ENCODE measurements at regions of chr16 and their contacts with region 1.

Region 1: DNA sequence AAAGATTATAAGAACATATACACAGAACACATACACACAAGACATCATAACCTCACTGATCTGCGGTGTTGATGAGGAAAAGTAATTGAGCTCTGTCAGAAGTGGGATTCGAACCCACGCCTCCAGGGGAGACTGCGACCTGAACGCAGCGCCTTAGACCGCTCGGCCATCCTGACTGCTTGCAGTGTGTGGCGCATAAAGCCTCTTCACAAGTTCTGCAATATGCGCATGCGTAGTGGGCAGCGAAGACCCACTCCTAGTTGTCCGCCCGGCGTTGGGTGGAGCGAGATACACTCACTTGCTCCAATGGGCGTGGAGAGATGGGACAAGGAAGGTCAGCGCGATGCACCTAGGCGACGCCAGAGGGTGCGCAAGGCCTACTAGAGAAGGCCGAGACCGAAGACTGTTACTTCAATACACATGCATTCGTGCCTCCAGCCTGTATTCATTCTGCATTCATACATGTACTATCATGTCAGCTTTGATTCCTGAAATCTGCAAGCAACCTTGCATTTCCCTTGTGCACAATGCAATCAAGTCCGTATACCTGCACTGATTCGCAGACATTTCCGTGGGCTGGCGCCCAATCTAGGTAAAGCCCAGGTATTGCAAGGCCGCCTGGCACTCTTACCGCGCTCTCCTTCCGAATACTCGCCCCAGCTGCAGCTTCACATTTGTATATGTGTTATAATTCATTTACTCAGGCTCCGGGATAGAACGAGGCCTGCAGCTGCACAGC is 16.1 kb upstream of the PLLP start:
- DNase-seq: peak; percentile 99
- ATAC-seq: peak; percentile 81
- H3K4me3 ChIP-seq: peak overlapping the region; percentile 58; the same call in 1 of the 2 replicates
- H3K27ac ChIP-seq: peak overlapping the region; percentile 77
- H3K4me1 ChIP-seq: peaks cover 34% of the 10 kb centered on the region
- H3K27me3 ChIP-seq: no peaks in the 10 kb centered on the region
- CTCF ChIP-seq: peak; percentile 95 to 99 (median 99); a peak in 5 of 6 replicates
- EP300 ChIP-seq: peak in 1 of 2 experiments; percentile 83; a peak in 1 of 4 replicates
- POLR2A ChIP-seq: no peak; the same call in 1 of the 2 replicates
- RAD21 ChIP-seq: peak; percentile 98

Region 2: GRCh38 chr16:57185944-57186871 is 114.3 kb before region 1 on chr16 and contains the starts of genes PSME3IP1 and RSPRY1:
- CTCF ChIA-PET with region 1: interaction called, 3 read pairs
- POLR2A ChIA-PET with region 1: interaction called, 4 read pairs
- RAD21 ChIA-PET with region 1: interaction called, 20 read pairs
- SMC1A ChIA-PET with region 1: interaction called, 4 read pairs
- in situ Hi-C with region 1: no loop called
- intact Hi-C with region 1: loop called (anchors 2 kb)
- DNase-seq: peak; percentile 99
- ATAC-seq: peak; percentile 92
- H3K4me3 ChIP-seq: peak within 1 kb of the TSS; percentile 84
- H3K27ac ChIP-seq: peak within 1 kb of the TSS; percentile 94
- H3K4me1 ChIP-seq: peaks cover 5% of the 10 kb centered on the region; the same call in 1 of the 2 replicates
- H3K27me3 ChIP-seq: no peaks in the 10 kb centered on the region
- CTCF ChIP-seq: no peak
- EP300 ChIP-seq: no peak
- POLR2A ChIP-seq: peak; percentile 91
- RAD21 ChIP-seq: no peak
- polyA plus RNA-seq, gene PSME3IP1: 72.5 to 90.2 TPM
- polyA plus RNA-seq, gene RSPRY1: 18.5 to 25.1 TPM

Region 3: DNA sequence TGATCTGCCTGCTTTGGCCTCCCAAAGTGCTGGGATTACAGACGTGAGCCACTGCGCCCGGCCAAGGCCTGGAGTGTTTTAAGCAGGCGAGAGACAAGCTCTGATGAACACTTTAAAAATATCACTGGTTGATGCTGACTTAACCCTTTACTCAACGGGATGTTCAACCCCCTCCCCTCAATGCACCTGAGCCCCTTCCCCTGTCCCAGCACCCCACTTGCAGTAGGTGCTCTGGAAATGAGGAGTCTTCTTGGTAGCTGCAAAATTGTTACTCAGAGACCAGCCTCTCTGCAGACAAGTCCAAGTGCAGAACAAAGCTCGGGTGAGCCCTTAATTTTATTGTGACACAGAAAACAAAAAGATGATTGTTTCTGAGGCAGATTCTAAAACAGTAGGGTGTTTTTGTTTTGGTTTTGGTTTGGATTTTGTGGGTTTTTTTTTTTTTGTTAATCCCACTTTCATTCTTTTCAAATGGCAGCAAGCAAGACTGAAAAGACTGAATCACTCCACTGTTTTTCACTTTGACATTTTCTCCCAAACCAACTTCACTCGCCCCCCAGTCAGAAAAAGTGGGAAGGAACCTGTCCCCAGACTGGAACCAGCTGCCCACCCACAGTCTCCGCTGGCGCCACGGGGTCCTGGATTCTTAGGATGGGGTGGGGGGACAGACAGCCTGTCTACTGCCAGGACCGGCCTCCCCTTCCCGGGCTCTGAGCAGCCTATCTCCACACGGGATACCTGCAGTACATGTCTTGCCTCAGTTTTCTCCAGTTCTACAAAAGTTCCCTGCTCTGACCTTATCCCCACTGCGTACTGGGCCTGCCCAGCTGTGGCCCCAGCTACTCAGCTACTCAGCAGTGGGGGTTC is 10.9 kb before region 1 on chr16:
- CTCF ChIA-PET with region 1: interaction called, 9 read pairs
- POLR2A ChIA-PET with region 1: interaction called, 3 read pairs
- RAD21 ChIA-PET with region 1: interaction called, 5 read pairs
- SMC1A ChIA-PET with region 1: interaction called, 11 read pairs
- in situ Hi-C with region 1: no loop called
- intact Hi-C with region 1: no loop called
- DNase-seq: no peak
- ATAC-seq: peak; percentile 63
- H3K4me3 ChIP-seq: no peak overlapping the region
- H3K27ac ChIP-seq: no peak overlapping the region
- H3K4me1 ChIP-seq: peaks cover 12% of the 10 kb centered on the region
- H3K27me3 ChIP-seq: no peaks in the 10 kb centered on the region
- CTCF ChIP-seq: no peak
- EP300 ChIP-seq: no peak
- POLR2A ChIP-seq: no peak
- RAD21 ChIP-seq: no peak

Region 4: GRCh38 chr16:57358527-57359095 is 58.1 kb after region 1 on chr16 and contains the start of gene CCL22:
- CTCF ChIA-PET with region 1: interaction called, 19 read pairs
- POLR2A ChIA-PET with region 1: interaction called, 9 read pairs
- RAD21 ChIA-PET with region 1: interaction called, 29 read pairs
- SMC1A ChIA-PET with region 1: interaction called, 14 read pairs
- in situ Hi-C with region 1: no loop called
- intact Hi-C with region 1: loop called (anchors 5 kb)
- DNase-seq: peak; percentile 45
- ATAC-seq: peak; percentile 71
- H3K4me3 ChIP-seq: peak within 1 kb of the TSS; percentile 37; the same call in 1 of the 2 replicates
- H3K27ac ChIP-seq: peak within 1 kb of the TSS; percentile 30
- H3K4me1 ChIP-seq: peaks cover 23% of the 10 kb centered on the region
- H3K27me3 ChIP-seq: no peaks in the 10 kb centered on the region
- CTCF ChIP-seq: no peak
- EP300 ChIP-seq: no peak; a peak in 1 of 4 replicates
- POLR2A ChIP-seq: peak; percentile 89
- RAD21 ChIP-seq: no peak
- polyA plus RNA-seq, gene CCL22: 581 to 591 TPM

Region 5: DNA sequence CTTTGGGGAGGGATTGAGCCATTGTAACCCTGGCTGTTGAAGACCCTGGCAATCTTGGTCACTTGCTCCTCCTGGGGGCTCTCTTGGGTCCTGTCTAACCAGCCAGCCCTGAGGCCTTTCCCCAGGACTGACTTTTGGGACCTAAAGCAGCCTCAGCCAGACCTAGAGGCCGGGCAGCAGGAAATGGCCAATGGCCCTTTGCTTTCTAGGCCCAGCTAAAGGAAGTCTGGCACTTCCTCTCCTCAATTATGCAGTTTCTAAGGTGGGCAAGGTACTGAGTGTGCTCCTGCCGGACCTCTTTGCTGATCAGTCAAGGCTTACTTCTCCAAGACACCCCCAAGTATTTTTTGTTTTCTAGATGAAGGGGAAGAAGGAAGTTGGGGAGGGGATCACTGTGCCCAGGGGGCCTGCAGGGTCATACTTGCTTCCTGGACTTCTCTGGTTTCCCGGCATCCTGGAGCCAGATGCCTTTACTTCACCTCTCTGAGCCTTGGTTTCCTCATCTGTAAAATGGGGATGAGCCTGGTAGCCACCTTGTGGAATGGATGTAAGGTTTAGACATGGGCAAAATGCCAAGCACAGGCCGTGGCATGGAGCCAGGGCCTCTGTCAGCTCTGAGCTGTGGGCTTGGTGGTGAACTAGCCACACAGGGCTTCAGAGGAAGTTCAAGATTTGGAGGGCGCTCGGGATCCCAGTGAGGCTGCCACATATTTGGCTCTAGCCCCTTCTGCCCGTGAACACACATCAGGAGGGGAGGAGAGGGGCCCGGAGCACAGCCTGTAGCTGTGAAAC is 80.3 kb after region 1 on chr16:
- CTCF ChIA-PET with region 1: interaction called, 20 read pairs
- POLR2A ChIA-PET with region 1: interaction called, 28 read pairs
- RAD21 ChIA-PET with region 1: interaction called, 40 read pairs
- SMC1A ChIA-PET with region 1: interaction called, 55 read pairs
- in situ Hi-C with region 1: no loop called
- intact Hi-C with region 1: loop called (anchors 1 kb)
- DNase-seq: no peak
- ATAC-seq: peak; percentile 3
- H3K4me3 ChIP-seq: no peak overlapping the region
- H3K27ac ChIP-seq: peak overlapping the region; percentile 27
- H3K4me1 ChIP-seq: peaks cover 53% of the 10 kb centered on the region
- H3K27me3 ChIP-seq: no peaks in the 10 kb centered on the region
- CTCF ChIP-seq: no peak
- EP300 ChIP-seq: no peak
- POLR2A ChIP-seq: no peak
- RAD21 ChIP-seq: no peak

Region 6: DNA sequence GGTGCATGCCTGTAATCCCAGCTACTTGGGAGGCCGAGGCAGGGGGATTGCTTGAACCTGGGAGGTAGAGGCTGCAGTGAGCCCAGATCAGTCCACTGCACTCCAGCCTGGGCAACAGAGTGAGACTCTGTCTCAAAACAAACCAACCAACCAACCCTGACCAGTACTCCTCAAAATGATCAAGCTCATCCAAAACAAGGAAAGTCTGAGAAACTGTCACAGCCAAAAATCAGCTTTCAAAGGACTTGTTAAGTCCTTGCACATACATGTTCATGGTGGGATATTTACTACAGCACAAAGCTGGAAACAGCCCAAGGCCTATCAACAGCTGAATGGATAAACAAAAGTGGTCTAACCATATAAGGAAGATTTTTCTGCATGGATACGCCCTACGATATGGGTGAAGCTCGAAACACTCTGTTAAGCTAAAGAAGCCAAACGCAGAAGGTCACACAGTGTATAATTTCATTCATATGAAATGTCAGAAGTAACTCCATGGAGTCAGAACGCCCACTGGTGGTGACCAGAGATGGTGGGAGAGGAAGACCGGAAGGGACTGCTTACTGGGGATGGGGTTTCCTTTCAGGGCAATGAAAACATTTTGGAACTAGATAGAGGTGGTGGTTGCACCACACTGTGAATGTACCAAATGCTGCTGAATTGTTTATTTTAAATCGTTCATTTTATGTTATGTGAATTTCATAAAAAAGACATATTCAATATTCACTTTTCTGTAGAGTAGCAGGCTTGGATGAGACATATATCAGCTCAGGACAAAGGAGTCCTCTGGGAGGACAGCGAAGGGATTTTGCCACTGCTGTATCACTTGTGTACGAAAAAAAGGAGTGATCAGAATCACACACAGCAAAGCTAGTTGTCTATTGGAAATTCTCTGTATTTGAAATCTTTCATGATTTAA is 121.7 kb after region 1 on chr16:
- CTCF ChIA-PET with region 1: interaction called, 632 read pairs
- POLR2A ChIA-PET with region 1: interaction called, 65 read pairs
- RAD21 ChIA-PET with region 1: interaction called, 293 read pairs
- SMC1A ChIA-PET with region 1: interaction called, 283 read pairs
- in situ Hi-C with region 1: loop called (anchors 5 kb)
- intact Hi-C with region 1: loop called (anchors 1 kb)
- DNase-seq: no peak
- ATAC-seq: peak; percentile 49
- H3K4me3 ChIP-seq: no peak overlapping the region
- H3K27ac ChIP-seq: no peak overlapping the region
- H3K4me1 ChIP-seq: peaks cover 4% of the 10 kb centered on the region
- H3K27me3 ChIP-seq: no peaks in the 10 kb centered on the region
- CTCF ChIP-seq: peak; percentile 48 to 62 (median 62); a peak in 5 of 6 replicates
- EP300 ChIP-seq: no peak
- POLR2A ChIP-seq: no peak
- RAD21 ChIP-seq: peak; percentile 71

Region 7: DNA sequence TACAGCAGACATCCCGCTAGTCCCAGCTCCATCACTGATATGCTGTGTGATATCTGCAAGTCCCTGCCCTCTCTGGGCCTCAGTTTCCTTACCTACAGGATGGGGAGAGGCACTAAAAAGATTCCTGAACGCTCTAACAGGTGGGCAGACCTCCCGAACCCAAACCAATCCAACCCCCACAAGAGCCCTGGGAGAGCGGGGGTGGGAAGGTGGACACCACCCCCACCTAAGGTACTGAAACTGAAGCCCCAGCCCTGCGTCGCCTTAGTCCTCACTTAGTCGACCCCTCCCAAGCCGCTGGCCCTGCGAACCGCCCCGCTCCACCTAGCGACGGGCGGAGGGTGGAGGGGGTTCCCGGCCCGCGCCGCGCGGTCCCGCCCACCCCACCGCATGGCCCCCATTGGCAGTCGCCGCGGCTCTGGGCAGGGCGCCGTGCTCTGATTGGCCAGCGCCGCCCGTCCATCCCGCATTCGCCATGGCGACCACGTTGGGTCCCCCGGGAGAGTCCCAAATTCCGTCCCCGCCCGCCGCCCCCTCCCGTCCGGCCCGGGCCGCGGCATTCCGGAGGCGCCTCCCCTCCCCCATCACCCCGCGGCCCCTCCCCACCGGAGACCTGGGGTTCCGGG is 235.2 kb after region 1 on chr16:
- CTCF ChIA-PET with region 1: interaction called, 3 read pairs
- POLR2A ChIA-PET with region 1: no interaction called
- RAD21 ChIA-PET with region 1: interaction called, 8 read pairs
- SMC1A ChIA-PET with region 1: no interaction called
- in situ Hi-C with region 1: no loop called
- intact Hi-C with region 1: loop called (anchors 5 kb)
- DNase-seq: no peak
- ATAC-seq: peak; percentile 82
- H3K4me3 ChIP-seq: peak overlapping the region; percentile 88
- H3K27ac ChIP-seq: peak overlapping the region; percentile 85
- H3K4me1 ChIP-seq: peaks cover 63% of the 10 kb centered on the region
- H3K27me3 ChIP-seq: no peaks in the 10 kb centered on the region
- CTCF ChIP-seq: 0 out of 6 replicates have a peak, but pooled peaks of 2 of the 3 experiments have one; percentile 16 to 24
- EP300 ChIP-seq: no peak
- POLR2A ChIP-seq: no peak
- RAD21 ChIP-seq: no peak